ENCODE measurements at regions of chr12 and their contacts with region 1.

Region 1: GRCh38 chr12:6567112-6567670 is 900 bp downstream of the NOP2 start:
- DNase-seq: no peak
- H3K4me3 ChIP-seq: peak overlapping the region; percentile 42 to 61
- H3K27ac ChIP-seq: peak overlapping the region; percentile 86 to 88
- H3K4me1 ChIP-seq: no peaks in the 10 kb centered on the region
- H3K27me3 ChIP-seq: no peaks in the 10 kb centered on the region
- CTCF ChIP-seq: no peak
- POLR2A ChIP-seq: no peak

Region 2: DNA sequence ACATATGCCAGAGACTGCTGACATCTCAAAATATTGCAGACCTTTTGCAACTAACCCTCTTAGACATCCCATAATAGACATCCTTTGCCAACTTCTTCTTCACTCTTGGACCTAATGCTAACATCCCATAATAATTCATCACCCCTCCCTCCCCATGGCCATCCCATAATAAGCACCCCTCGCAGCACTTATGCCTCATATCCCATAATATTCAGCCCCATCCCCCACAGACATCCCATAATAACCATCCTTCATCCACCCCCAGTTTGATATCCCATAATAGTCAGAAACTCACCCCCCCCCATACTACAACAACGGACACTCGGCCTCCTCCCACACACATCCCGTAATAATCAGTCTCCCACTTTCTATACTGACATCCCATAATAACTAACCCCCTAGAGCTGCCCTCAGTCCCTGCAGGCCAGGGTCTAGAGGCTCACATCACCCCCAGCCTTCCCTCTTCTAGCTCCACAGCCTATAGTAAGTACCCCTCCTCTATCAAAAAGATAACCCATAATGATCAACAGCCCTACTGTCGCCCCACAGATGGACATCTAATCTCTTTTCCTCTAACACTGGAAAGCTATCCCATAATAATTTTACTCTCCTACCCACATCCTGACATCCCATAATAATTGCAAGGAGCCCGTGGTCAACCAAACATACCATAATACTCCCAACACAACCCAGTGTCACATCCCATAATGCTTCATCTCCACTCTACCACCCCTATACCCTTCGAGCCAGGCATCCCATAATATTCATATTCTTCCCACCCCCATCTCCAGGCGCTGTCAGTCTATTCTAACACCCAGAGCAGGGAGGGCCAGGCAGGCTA is 40.8 kb after region 1 on chr12:
- intact Hi-C with region 1: loop called (anchors 5 kb)
- DNase-seq: no peak
- H3K4me3 ChIP-seq: no peak overlapping the region
- H3K27ac ChIP-seq: peak overlapping the region; percentile 66 to 96
- H3K4me1 ChIP-seq: peaks cover 31% of the 10 kb centered on the region
- H3K27me3 ChIP-seq: no peaks in the 10 kb centered on the region
- CTCF ChIP-seq: no peak
- POLR2A ChIP-seq: no peak

Region 3: DNA sequence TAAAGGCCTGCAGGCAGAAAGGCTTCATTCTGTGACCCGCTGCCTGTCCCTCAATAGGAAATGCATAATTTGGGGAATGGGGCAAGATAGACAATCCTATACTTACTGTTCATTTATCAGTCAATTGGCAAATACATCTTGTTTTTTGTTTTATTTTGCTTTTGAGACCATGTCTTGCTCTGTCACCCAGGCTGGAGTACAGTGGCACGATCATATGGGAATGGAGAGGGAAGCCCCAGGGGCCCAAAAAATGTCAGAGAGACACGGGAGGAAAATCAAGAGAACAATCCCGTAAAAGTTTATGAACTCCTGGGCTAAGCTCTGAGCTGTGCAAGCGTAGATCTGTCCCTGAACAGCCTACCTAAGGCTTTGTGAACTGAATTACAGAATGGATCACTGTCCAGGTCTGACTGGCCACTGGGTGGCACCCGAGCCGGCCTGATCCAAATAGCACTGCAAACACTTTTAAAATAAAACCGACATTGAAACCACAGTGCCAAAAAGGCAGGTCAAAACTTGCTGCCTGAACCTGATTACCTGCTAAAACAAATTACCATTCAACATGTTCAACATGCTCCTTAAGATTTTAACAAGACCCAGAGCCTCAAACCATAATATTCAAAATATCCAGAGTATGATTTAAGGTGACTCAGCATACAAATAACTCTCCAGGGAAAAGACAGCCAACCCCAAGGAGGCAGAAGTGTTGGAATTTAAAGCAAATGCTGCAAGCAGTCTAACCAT is 168.4 kb after region 1 on chr12:
- intact Hi-C with region 1: no loop called
- DNase-seq: peak; percentile 88
- H3K4me3 ChIP-seq: no peak overlapping the region
- H3K27ac ChIP-seq: peak overlapping the region; percentile 20 to 57
- H3K4me1 ChIP-seq: no peaks in the 10 kb centered on the region
- H3K27me3 ChIP-seq: no peaks in the 10 kb centered on the region
- CTCF ChIP-seq: peak; percentile 31 to 93 (median 82)
- POLR2A ChIP-seq: no peak

Region 4: GRCh38 chr12:6843118-6843902 is 276.1 kb after region 1 on chr12:
- intact Hi-C with region 1: no loop called
- DNase-seq: no peak
- H3K4me3 ChIP-seq: no peak overlapping the region
- H3K27ac ChIP-seq: no peak overlapping the region
- H3K4me1 ChIP-seq: no peaks in the 10 kb centered on the region
- H3K27me3 ChIP-seq: no peaks in the 10 kb centered on the region
- CTCF ChIP-seq: no peak
- POLR2A ChIP-seq: no peak

Region 5: DNA sequence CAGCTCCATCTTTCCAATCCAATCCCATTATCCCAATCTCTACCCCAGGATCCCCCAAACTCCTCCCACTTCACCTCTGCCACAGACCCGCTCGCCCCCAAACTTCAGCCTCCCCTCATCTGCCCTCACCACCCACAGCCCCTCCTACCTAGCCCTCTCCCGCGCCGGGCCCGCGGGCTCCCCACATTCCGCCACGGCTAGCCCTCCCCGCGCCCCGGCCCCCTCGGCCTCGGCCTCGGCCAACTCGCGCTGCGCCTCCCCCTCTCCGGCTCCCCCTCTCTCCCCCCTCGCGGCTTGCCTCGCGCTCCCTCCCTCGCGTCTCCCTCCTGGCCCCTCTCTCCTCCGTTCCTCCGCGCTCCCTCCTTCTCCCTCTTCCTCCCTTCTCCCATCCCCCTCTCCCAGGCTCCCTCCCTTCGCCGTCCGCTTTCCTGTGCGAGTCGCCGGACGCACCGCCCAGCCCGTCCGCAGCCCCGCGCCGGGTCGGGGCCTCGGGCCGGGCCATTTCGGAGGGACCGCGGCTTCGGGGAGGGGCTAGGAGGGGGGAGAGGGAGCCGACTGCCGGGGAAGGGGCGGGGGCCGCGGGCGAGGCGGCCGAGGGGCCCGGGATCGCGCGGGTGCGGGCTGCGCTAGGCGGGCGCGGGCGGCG is 360.3 kb after region 1 on chr12 and contains the start of gene ATN1:
- intact Hi-C with region 1: no loop called
- DNase-seq: peak; percentile 74
- H3K4me3 ChIP-seq: peak within 1 kb of the TSS; percentile 92 to 95
- H3K27ac ChIP-seq: peak within 1 kb of the TSS; percentile 94 to 98
- H3K4me1 ChIP-seq: peaks cover 22% of the 10 kb centered on the region
- H3K27me3 ChIP-seq: no peaks in the 10 kb centered on the region
- CTCF ChIP-seq: no peak
- POLR2A ChIP-seq: peak; percentile 62
- total RNA-seq, gene ATN1: 93.0 to 129 TPM